ENCODE measurements at regions of chr3 and their contacts with region 1.

Region 1: GRCh38 chr3:113736548-113737089 is 9.4 kb downstream of the NAA50 start:
- H3K4me3 Mint-ChIP-seq: peak overlapping the region; percentile 17
- H3K27ac Mint-ChIP-seq: no peak overlapping the region
- H3K4me1 Mint-ChIP-seq: peaks cover 25% of the 10 kb centered on the region
- H3K27me3 Mint-ChIP-seq: no peaks in the 10 kb centered on the region

Region 2: GRCh38 chr3:113783463-113783862 is 46.8 kb after region 1 on chr3:
- intact Hi-C with region 1: no loop called
- H3K4me3 Mint-ChIP-seq: no peak overlapping the region
- H3K27ac Mint-ChIP-seq: peak overlapping the region; percentile 67
- H3K4me1 Mint-ChIP-seq: no peaks in the 10 kb centered on the region
- H3K27me3 Mint-ChIP-seq: no peaks in the 10 kb centered on the region

Region 3: GRCh38 chr3:113802795-113803455 is 66.3 kb after region 1 on chr3:
- intact Hi-C with region 1: no loop called
- H3K4me3 Mint-ChIP-seq: no peak overlapping the region
- H3K27ac Mint-ChIP-seq: no peak overlapping the region
- H3K4me1 Mint-ChIP-seq: no peaks in the 10 kb centered on the region
- H3K27me3 Mint-ChIP-seq: no peaks in the 10 kb centered on the region

Region 4: GRCh38 chr3:113838631-113839209 is 102.1 kb after region 1 on chr3 and contains the start of gene GRAMD1C:
- intact Hi-C with region 1: loop called (anchors 5 kb)
- H3K4me3 Mint-ChIP-seq: peak within 1 kb of the TSS; percentile 69
- H3K27ac Mint-ChIP-seq: no peak within 1 kb of the TSS
- H3K4me1 Mint-ChIP-seq: peaks cover 15% of the 10 kb centered on the region
- H3K27me3 Mint-ChIP-seq: peaks cover 5% of the 10 kb centered on the region

Region 5: GRCh38 chr3:114152519-114153151 is 416.0 kb after region 1 on chr3:
- intact Hi-C with region 1: loop called (anchors 5 kb)
- H3K4me3 Mint-ChIP-seq: peak overlapping the region; percentile 67
- H3K27ac Mint-ChIP-seq: no peak overlapping the region
- H3K4me1 Mint-ChIP-seq: peaks cover 4% of the 10 kb centered on the region
- H3K27me3 Mint-ChIP-seq: peaks cover 10% of the 10 kb centered on the region